ENCODE measurements at regions of chr15 and their contacts with region 1.

Region 1: DNA sequence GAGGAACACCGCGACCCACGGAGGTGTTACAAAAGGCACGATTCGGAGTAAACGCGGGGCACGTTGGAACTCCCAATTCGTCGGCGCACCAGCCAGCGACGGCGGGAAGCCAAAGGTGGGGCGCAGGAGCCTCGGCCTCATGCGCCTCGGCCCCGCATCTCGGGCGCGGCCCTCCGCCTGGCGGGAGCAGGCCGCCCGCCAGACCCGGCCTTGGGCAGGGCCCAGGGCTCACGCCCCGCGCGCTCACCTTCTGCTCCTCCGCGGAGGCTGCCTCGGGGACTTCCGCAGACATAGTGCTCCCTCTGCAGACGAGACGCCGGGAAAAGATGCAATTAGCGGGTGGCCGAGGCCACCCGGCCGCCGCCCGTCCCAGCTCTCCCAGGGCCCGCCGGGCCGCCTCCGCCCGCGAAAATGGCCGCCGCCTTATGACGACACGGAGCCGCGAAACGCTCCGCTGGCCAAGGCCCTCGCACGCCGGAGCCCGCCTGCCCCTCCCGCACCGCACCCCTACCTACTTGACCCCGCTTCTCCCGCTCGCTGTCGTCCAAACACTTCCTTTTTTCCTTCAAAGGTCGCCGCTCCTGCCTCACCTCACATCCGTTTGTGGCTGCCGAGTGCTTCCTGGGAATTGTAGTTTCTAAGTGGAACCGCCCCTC is at the start of gene ARPP19:
- DNase-seq: peak; percentile 80
- H3K4me3 Mint-ChIP-seq: peak within 1 kb of the TSS; percentile 96
- H3K27ac Mint-ChIP-seq: peak within 1 kb of the TSS; percentile 99
- H3K4me1 Mint-ChIP-seq: peaks cover 30% of the 10 kb centered on the region
- H3K27me3 Mint-ChIP-seq: no peaks in the 10 kb centered on the region
- total RNA-seq, gene ARPP19: 178 and 182 TPM in 2 replicates

Region 2: GRCh38 chr15:52261498-52262242 is 307.1 kb before region 1 on chr15:
- intact Hi-C with region 1: loop called (anchors 2 kb)
- DNase-seq: peak; percentile 69
- H3K4me3 Mint-ChIP-seq: peak overlapping the region; percentile 51
- H3K27ac Mint-ChIP-seq: peak overlapping the region; percentile 84
- H3K4me1 Mint-ChIP-seq: peaks cover 42% of the 10 kb centered on the region
- H3K27me3 Mint-ChIP-seq: no peaks in the 10 kb centered on the region

Region 3: GRCh38 chr15:52735231-52736089 is 166.7 kb after region 1 on chr15:
- intact Hi-C with region 1: loop called (anchors 5 kb)
- DNase-seq: peak; percentile 64
- H3K4me3 Mint-ChIP-seq: no peak overlapping the region
- H3K27ac Mint-ChIP-seq: no peak overlapping the region
- H3K4me1 Mint-ChIP-seq: peaks cover 16% of the 10 kb centered on the region
- H3K27me3 Mint-ChIP-seq: peaks cover 16% of the 10 kb centered on the region